ENCODE measurements at regions of chr12 and their contacts with region 1.

Region 1: DNA sequence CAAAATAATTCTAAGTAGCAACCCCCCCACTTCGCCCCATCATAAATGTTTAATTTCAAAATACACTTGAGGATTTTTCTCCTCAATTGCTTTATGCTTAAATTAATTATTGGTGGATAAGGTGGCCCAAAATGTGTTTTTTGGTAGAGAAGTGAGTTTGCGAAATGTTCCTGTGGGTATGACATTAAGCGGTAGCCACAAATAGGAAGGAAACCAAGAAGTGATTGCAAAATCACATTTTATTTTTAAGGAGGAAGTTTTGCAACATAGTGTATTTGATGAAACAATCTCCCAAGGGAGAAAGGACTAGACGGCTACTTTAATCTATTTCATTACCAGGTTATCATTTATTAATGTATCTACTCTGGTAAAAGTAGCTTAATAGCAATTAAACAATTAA is 25.5 kb downstream of the SLC25A3 start:
- DNase-seq: peak; percentile 48 to 74 (median 63)
- H3K4me3 ChIP-seq: no peak overlapping the region
- H3K27ac ChIP-seq: no peak overlapping the region
- H3K4me1 ChIP-seq: peaks cover under 1 to 44% (median 14%) of the 10 kb centered on the region in 4 experiments
- H3K27me3 ChIP-seq: no peaks in the 10 kb centered on the region

Region 2: DNA sequence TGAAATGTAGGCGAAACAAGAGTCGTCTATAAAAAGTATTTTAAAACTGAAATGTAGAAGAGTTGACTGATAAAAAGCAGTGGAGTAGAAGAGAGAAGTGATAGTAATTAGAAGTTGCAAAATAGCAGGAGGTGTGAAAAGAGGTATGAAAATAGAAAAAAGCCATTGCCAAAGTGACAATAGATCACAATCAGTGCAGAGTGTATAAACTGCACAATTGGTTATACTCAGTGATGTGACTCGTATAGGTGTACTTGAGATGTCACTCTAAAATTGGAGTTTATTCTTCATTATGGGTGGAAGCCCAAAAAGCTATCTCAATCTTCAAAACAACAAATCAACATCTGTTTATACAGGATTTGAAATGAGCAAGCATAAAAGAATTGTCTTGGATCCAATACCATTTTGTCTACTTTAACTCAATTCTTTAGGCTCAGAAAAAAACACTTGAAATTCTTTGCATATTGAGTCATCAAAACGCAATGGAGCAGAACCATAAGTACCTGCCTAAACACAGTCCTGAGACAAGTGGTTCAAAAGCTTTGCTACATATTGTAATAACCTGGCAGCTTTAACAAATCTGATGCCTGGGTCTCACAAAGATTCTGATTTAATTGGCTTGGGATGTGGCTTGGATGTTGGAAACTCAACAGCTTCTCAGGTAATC is 16.8 kb after region 1 on chr12:
- CTCF ChIA-PET with region 1: interaction called, 13 read pairs
- POLR2A ChIA-PET with region 1: no interaction called
- DNase-seq: no peak
- H3K4me3 ChIP-seq: no peak overlapping the region
- H3K27ac ChIP-seq: no peak overlapping the region
- H3K4me1 ChIP-seq: no peaks in the 10 kb centered on the region
- H3K27me3 ChIP-seq: no peaks in the 10 kb centered on the region